ENCODE measurements at regions of chr9 and their contacts with region 1.

Region 1: DNA sequence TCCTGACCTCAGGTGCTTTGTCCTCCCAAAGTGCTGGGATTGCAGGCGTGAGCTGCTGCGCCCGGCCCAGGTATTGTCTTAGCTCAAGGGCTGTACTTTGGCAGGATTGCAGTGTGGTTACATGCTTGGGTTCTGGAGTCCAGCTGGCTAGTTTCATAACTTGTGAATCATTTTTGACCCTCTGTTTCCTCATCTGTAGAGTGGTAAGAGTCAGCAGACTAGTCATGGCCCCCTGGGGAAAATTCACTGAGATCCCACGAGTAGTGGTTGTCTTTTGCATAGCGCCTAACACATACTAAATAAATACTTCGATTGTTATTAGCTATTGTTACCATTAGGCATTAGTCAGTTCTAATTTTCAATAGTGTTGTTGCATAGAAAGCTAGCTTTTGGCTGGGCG is 14.3 kb downstream of the PTPA start:
- DNase-seq: no peak
- H3K4me3 ChIP-seq: no peak overlapping the region
- H3K27ac ChIP-seq: no peak overlapping the region
- H3K4me1 ChIP-seq: no peaks in the 10 kb centered on the region
- H3K27me3 ChIP-seq: no peaks in the 10 kb centered on the region
- CTCF ChIP-seq: no peak
- POLR2A ChIP-seq: no peak

Region 2: DNA sequence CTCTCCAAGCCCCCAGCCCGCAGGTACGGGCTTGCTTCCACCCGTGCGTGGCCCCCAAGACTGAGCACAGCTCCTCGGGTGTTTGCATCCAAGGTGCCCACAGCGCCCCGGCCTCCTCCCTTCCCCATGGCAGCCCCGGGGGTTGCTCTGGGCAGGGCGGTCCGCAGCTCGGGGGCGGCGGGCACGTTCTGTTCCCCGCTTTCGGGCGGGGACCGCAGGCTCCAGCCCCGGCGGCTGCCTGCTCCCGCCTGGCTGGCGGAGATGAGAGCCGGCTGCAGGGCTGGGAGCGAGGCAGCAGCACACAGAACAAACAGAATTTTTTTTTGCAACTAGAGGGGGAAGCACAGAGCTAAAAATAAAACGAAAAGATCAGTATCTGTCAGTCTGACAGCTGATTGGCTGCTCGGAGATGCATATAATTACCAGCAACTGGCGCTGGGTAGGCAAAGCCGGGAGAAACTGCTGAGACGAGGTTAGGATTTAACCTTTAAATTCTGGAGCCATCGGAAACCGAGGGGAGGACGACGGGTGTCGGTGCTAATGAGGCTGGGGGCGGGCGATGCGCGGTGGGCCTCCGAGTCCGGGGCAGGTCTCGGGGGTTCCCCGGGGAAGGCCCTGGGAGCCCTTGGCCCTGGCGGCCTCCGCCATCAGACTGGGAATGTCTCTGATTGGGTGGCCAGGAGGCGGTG is 195.2 kb after region 1 on chr9:
- intact Hi-C with region 1: no loop called
- DNase-seq: peak in 1 of 2 donors; percentile 89
- H3K4me3 ChIP-seq: peak overlapping the region; percentile 48 to 53
- H3K27ac ChIP-seq: peak overlapping the region; percentile 96
- H3K4me1 ChIP-seq: peaks cover 83% of the 10 kb centered on the region
- H3K27me3 ChIP-seq: no peaks in the 10 kb centered on the region
- CTCF ChIP-seq: peak in 1 of 3 experiments; percentile 27
- POLR2A ChIP-seq: peak in 1 of 2 donors; percentile 74

Region 3: DNA sequence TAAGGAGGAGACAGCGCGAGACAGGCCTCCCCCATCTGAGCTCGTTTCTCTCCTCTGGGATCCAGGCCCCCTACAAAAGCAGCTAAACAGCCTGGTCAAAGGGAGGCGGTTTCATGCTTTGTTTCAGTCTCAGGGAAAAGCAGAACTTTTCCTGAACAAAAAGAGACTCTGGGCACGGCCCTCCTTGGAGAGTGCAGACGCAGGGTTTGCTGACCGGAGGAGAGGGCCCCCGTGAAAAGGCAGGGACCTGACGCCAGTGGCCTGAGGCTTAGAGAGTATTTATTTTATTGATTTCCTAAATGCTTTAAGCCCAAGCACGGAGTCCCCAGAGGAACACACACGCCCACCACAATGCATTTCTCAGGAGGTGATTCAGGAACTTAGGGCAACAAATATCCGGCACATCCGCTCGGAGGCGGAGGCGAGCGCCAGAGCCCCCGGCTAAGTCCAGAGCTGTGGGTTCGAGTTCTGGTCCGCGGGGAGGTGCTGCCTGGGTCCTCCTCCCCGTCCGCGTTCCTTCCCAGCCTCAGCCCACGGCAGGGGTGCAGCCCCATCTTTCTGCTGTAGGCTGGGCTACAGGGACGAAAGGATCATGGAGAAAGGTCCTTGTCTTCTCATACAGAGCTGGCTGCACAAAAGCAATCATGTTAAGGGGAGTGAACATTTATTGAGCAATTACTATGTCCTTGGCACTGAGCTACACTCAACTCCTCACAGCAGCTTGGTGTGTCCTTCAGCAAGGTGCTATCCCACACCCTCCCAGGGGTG is 587.3 kb after region 1 on chr9:
- intact Hi-C with region 1: loop called (anchors 10 kb)
- DNase-seq: no peak
- H3K4me3 ChIP-seq: no peak overlapping the region
- H3K27ac ChIP-seq: peak overlapping the region; percentile 76
- H3K4me1 ChIP-seq: peaks cover 41% of the 10 kb centered on the region
- H3K27me3 ChIP-seq: no peaks in the 10 kb centered on the region
- CTCF ChIP-seq: no peak
- POLR2A ChIP-seq: no peak